Tibial artery (tissue), 4 donors: ENCODE measurements at regions of chr22 and their contacts with region 1.

Region 1: DNA sequence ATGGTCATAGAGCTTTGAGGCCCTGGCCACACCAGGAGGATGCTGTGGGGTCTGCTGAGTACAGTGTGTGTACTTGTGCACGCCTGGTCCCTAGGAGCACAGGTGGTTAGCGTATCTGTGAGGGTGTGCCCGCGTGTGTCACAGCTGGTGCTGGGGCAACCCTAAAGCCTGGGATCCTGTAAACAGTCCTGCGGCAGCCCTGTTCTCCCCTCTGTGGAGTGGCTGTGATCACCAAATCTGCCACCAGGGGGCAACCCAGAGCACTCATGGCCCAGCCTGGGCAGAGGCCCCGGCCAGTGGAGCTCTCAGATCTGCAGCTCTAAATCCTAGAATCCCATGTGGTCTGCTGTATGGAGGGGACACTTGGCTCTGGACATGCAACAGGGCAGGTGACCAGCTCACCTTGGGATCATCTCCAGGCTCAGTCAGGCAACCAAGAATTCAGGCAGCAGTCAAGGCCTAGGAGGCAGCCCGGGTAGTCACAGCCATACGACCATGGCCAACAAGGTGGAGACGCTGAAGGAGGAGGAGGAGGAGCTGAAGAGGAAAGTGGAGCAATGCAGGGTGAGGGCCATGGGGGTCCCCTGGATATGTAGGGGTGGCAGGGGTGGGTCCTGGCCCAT is 3.9 kb downstream of the SH3BP1 start:
- DNase-seq: peak; percentile 85 to 87
- H3K4me3 ChIP-seq: no peak overlapping the region
- H3K27ac ChIP-seq: no peak overlapping the region
- H3K4me1 ChIP-seq: peaks cover 0 to 37% (median 12%) of the 10 kb centered on the region in 4 donors
- H3K27me3 ChIP-seq: peaks cover 0 to 34% of the 10 kb centered on the region in 2 donors
- CTCF ChIP-seq: peak; percentile 91 to 93

Region 2: DNA sequence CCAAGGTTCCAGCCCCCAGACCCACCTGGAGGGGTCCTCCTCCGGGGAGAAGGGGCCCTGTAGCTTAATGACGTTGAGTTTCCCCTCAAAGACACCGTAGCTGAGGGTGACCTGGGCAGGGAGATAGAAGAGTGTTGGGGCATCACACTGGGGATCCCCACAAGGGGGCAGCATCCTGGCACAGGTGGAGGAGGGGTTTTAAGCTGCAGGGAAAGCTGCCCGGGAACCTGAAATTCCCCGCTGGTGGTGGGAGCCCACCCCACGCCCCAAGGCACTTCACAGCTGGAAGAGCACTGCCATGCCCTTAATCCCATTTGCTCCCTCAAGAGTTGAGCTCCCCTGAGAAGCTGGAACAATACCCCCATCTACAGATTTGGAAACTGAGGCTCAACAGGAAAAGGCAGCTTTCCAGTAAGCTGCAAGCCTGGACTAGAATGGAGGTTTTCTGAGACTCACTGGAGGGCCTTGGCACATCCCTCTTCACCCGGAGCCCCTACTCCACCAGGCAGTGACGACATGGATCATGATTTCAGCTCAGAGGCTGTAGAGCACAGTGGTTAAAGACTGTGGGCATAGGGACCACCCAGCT is 170.8 kb before region 1 on chr22:
- intact Hi-C with region 1: no loop called
- DNase-seq: no peak
- H3K4me3 ChIP-seq: no peak overlapping the region
- H3K27ac ChIP-seq: no peak overlapping the region
- H3K4me1 ChIP-seq: no peaks in the 10 kb centered on the region
- H3K27me3 ChIP-seq: peaks cover 0 to 77% of the 10 kb centered on the region in 2 donors
- CTCF ChIP-seq: no peak

Region 3: GRCh38 chr22:37581504-37581903 is 61.8 kb before region 1 on chr22:
- intact Hi-C with region 1: no loop called
- DNase-seq: no peak
- H3K4me3 ChIP-seq: no peak overlapping the region
- H3K27ac ChIP-seq: peak overlapping the region in 1 of 2 donors; percentile 26
- H3K4me1 ChIP-seq: peaks cover 0 to 19% (median 11%) of the 10 kb centered on the region in 4 donors
- H3K27me3 ChIP-seq: no peaks in the 10 kb centered on the region
- CTCF ChIP-seq: no peak

Region 4: GRCh38 chr22:37792494-37792893 is 149.2 kb after region 1 on chr22:
- intact Hi-C with region 1: loop called (anchors 5 kb)
- DNase-seq: no peak
- H3K4me3 ChIP-seq: no peak overlapping the region
- H3K27ac ChIP-seq: no peak overlapping the region
- H3K4me1 ChIP-seq: peaks cover 0 to 6% (median 0%) of the 10 kb centered on the region in 4 donors
- H3K27me3 ChIP-seq: no peaks in the 10 kb centered on the region
- CTCF ChIP-seq: no peak